ENCODE measurements at regions of chr10 and their contacts with region 1.

Region 1: DNA sequence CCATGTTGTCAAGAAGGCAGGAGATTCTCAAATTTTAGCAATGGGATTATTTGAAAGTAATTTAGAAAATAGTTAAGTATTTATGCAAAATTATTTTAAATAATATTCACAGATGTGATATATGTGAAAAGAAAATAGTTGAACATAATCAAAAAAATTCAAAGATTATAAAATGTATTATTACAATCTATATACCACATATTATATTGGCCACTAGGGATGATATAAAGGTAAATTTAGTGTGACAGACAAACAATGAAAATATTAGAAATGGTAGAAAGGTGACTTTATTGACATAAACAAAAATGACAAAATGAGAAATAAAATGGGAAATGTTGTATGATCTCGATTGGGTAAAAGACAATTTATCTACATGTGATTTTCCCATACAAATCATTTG is 385.5 kb downstream of the PCDH15 start:
- DNase-seq: peak; percentile 36
- ATAC-seq: peak; percentile 35; the same call in 1 of the 2 replicates
- H3K4me3 ChIP-seq: no peak overlapping the region
- H3K27ac ChIP-seq: no peak overlapping the region
- H3K4me1 ChIP-seq: no peaks in the 10 kb centered on the region
- H3K27me3 ChIP-seq: no peaks in the 10 kb centered on the region
- CTCF ChIP-seq: peak; percentile 55

Region 2: GRCh38 chr10:54262726-54263125 is 152.8 kb before region 1 on chr10:
- CTCF ChIA-PET with region 1: no interaction called
- POLR2A ChIA-PET with region 1: no interaction called
- intact Hi-C with region 1: no loop called
- DNase-seq: no peak
- ATAC-seq: no peak
- H3K4me3 ChIP-seq: no peak overlapping the region
- H3K27ac ChIP-seq: no peak overlapping the region
- H3K4me1 ChIP-seq: no peaks in the 10 kb centered on the region
- H3K27me3 ChIP-seq: no peaks in the 10 kb centered on the region
- CTCF ChIP-seq: no peak

Region 3: GRCh38 chr10:54940418-54940817 is 524.9 kb after region 1 on chr10:
- CTCF ChIA-PET with region 1: no interaction called
- POLR2A ChIA-PET with region 1: no interaction called
- intact Hi-C with region 1: loop called (anchors 5 kb)
- DNase-seq: peak; percentile 17
- ATAC-seq: peak; percentile 82
- H3K4me3 ChIP-seq: no peak overlapping the region
- H3K27ac ChIP-seq: no peak overlapping the region
- H3K4me1 ChIP-seq: no peaks in the 10 kb centered on the region
- H3K27me3 ChIP-seq: no peaks in the 10 kb centered on the region
- CTCF ChIP-seq: peak; percentile 54

Measured in PC-3 (cell line).